ENCODE measurements at regions of chr1 and their contacts with region 1.

Region 1: GRCh38 chr1:26363549-26364448 is 8.8 kb downstream of the ZNF683 start:
- DNase-seq: peak; percentile 78 to 84 (median 79)
- H3K4me3 ChIP-seq: no peak overlapping the region
- H3K4me3 Mint-ChIP-seq: peak overlapping the region in 6 of 8 donors; percentile 54 to 82 (median 64)
- H3K27ac ChIP-seq: no peak overlapping the region
- H3K27ac Mint-ChIP-seq: peak overlapping the region in 6 of 7 donors; percentile 27 to 88 (median 70)
- H3K4me1 ChIP-seq: peaks cover 70% of the 10 kb centered on the region
- H3K4me1 Mint-ChIP-seq: peaks cover 31 to 81% (median 52%) of the 10 kb centered on the region in 4 donors
- H3K27me3 ChIP-seq: no peaks in the 10 kb centered on the region
- H3K27me3 Mint-ChIP-seq: no peaks in the 10 kb centered on the region

Region 2: GRCh38 chr1:24720152-24720551 is 1643.6 kb before region 1 on chr1:
- CTCF ChIA-PET with region 1: no interaction called
- POLR2A ChIA-PET with region 1: no interaction called
- intact Hi-C with region 1: no loop called
- DNase-seq: no peak
- H3K4me3 ChIP-seq: no peak overlapping the region
- H3K4me3 Mint-ChIP-seq: no peak overlapping the region
- H3K27ac ChIP-seq: no peak overlapping the region
- H3K27ac Mint-ChIP-seq: no peak overlapping the region
- H3K4me1 ChIP-seq: peaks cover 3% of the 10 kb centered on the region
- H3K4me1 Mint-ChIP-seq: peaks cover 5 to 10% (median 7%) of the 10 kb centered on the region in 4 donors
- H3K27me3 ChIP-seq: no peaks in the 10 kb centered on the region
- H3K27me3 Mint-ChIP-seq: peaks cover 0 to 3% of the 10 kb centered on the region in 2 donors

Region 3: DNA sequence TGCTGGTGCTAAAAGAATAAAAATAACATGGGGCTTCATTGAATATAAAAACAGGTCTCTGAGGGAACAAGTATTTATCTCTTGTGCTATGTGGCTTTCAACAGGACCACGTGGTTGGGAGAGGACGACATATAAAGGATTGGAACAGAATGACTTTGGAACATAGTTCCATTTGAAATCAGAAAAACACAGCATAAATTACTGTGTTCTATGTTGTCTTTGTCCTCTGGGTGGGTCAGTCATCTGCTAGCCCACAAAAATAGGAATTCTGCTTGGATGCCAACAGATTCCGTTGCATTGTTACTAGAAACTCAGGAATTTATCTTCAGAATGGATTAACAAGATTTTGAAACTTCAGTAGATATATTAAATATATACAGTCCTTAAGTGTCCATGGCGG is 123.9 kb before region 1 on chr1:
- CTCF ChIA-PET with region 1: interaction called, 13 read pairs
- POLR2A ChIA-PET with region 1: interaction called, 8 read pairs
- intact Hi-C with region 1: loop called (anchors 1 kb)
- DNase-seq: no peak
- H3K4me3 ChIP-seq: no peak overlapping the region
- H3K4me3 Mint-ChIP-seq: no peak overlapping the region
- H3K27ac ChIP-seq: no peak overlapping the region
- H3K27ac Mint-ChIP-seq: no peak overlapping the region
- H3K4me1 ChIP-seq: peaks cover 21% of the 10 kb centered on the region
- H3K4me1 Mint-ChIP-seq: peaks cover 19 to 29% (median 25%) of the 10 kb centered on the region in 4 donors
- H3K27me3 ChIP-seq: no peaks in the 10 kb centered on the region
- H3K27me3 Mint-ChIP-seq: no peaks in the 10 kb centered on the region

Region 4: GRCh38 chr1:26284597-26285360 is 79.0 kb before region 1 on chr1:
- CTCF ChIA-PET with region 1: interaction called, 307 read pairs
- POLR2A ChIA-PET with region 1: interaction called, 61 read pairs
- intact Hi-C with region 1: loop called (anchors 1 kb)
- DNase-seq: peak; percentile 91 to 99 (median 92)
- H3K4me3 ChIP-seq: peak overlapping the region; percentile 38 to 50
- H3K4me3 Mint-ChIP-seq: peak overlapping the region; percentile 82 to 94 (median 89)
- H3K27ac ChIP-seq: peak overlapping the region; percentile 91
- H3K27ac Mint-ChIP-seq: peak overlapping the region; percentile 94 to 100 (median 99)
- H3K4me1 ChIP-seq: peaks cover 95% of the 10 kb centered on the region
- H3K4me1 Mint-ChIP-seq: peaks cover 63 to 96% (median 81%) of the 10 kb centered on the region in 4 donors
- H3K27me3 ChIP-seq: no peaks in the 10 kb centered on the region
- H3K27me3 Mint-ChIP-seq: no peaks in the 10 kb centered on the region

Region 5: DNA sequence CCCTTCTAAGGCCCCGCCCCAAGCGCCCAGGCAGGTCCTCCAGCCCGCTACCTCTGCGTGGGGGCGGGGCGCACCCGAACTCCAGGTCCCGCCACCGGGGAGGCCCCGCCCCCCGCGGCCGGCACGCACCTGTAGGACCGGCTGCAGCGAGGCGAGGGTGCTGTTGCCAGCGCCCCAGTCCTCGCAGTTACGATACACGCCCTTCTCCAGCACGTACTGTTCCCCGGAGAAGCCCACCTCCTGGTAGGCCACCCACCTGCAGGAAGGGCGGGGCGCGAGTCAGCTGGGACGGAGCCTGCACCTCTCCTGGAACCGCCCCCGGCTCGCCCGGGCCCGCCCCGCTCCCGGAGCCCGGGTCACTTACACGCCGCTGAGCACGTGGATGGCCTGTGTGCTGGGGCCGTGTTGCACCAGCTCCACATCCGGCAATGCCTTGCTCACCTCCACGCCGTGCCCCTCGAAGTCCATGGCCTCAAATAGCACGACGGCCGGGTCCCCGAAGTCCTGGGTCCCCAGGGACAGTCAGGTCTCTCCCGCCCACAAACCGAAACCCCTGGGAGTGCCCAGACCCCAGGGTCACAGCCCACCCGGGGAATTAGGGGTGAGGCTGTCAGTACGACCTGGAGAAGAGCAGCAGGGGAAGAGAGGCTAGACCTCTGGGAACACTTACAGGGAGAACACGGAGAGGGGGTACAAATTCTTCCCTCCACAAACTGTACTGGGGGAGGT is 27.2 kb before region 1 on chr1:
- CTCF ChIA-PET with region 1: interaction called, 12 read pairs
- POLR2A ChIA-PET with region 1: interaction called, 5 read pairs
- intact Hi-C with region 1: loop called (anchors 1 kb)
- DNase-seq: peak; percentile 79 to 88 (median 82)
- H3K4me3 ChIP-seq: peak overlapping the region; percentile 61 to 73
- H3K4me3 Mint-ChIP-seq: peak overlapping the region; percentile 89 to 95 (median 92)
- H3K27ac ChIP-seq: peak overlapping the region; percentile 49
- H3K27ac Mint-ChIP-seq: peak overlapping the region in 6 of 7 donors; percentile 12 to 75 (median 62)
- H3K4me1 ChIP-seq: peaks cover 19% of the 10 kb centered on the region
- H3K4me1 Mint-ChIP-seq: peaks cover 0 to 33% (median 9%) of the 10 kb centered on the region in 4 donors
- H3K27me3 ChIP-seq: no peaks in the 10 kb centered on the region
- H3K27me3 Mint-ChIP-seq: no peaks in the 10 kb centered on the region

Region 6: GRCh38 chr1:26391450-26391849 is 27.7 kb after region 1 on chr1:
- CTCF ChIA-PET with region 1: interaction called, 121 read pairs
- POLR2A ChIA-PET with region 1: interaction called, 15 read pairs
- intact Hi-C with region 1: loop called (anchors 1 kb)
- DNase-seq: peak; percentile 52 to 63 (median 56)
- H3K4me3 ChIP-seq: no peak overlapping the region
- H3K4me3 Mint-ChIP-seq: peak overlapping the region in 2 of 8 donors; percentile 1 to 43
- H3K27ac ChIP-seq: no peak overlapping the region
- H3K27ac Mint-ChIP-seq: peak overlapping the region in 3 of 7 donors; percentile 51 to 75 (median 59)
- H3K4me1 ChIP-seq: peaks cover 42% of the 10 kb centered on the region
- H3K4me1 Mint-ChIP-seq: peaks cover 24 to 40% (median 28%) of the 10 kb centered on the region in 4 donors
- H3K27me3 ChIP-seq: no peaks in the 10 kb centered on the region
- H3K27me3 Mint-ChIP-seq: no peaks in the 10 kb centered on the region

Region 7: GRCh38 chr1:26408604-26409003 is 44.8 kb after region 1 on chr1:
- CTCF ChIA-PET with region 1: interaction called, 12 read pairs
- POLR2A ChIA-PET with region 1: no interaction called
- intact Hi-C with region 1: no loop called
- DNase-seq: peak; percentile 75 to 84 (median 78)
- H3K4me3 ChIP-seq: no peak overlapping the region
- H3K4me3 Mint-ChIP-seq: peak overlapping the region; percentile 23 to 79 (median 62)
- H3K27ac ChIP-seq: no peak overlapping the region
- H3K27ac Mint-ChIP-seq: peak overlapping the region in 2 of 7 donors; percentile 49 to 74
- H3K4me1 ChIP-seq: peaks cover 17% of the 10 kb centered on the region
- H3K4me1 Mint-ChIP-seq: peaks cover 9 to 24% (median 17%) of the 10 kb centered on the region in 4 donors
- H3K27me3 ChIP-seq: peaks cover 37% of the 10 kb centered on the region
- H3K27me3 Mint-ChIP-seq: peaks cover 32 to 42% of the 10 kb centered on the region in 2 donors

Region 8: GRCh38 chr1:26449868-26450267 is 86.1 kb after region 1 on chr1:
- CTCF ChIA-PET with region 1: no interaction called
- POLR2A ChIA-PET with region 1: no interaction called
- intact Hi-C with region 1: no loop called
- DNase-seq: no peak
- H3K4me3 ChIP-seq: no peak overlapping the region
- H3K4me3 Mint-ChIP-seq: no peak overlapping the region
- H3K27ac ChIP-seq: no peak overlapping the region
- H3K27ac Mint-ChIP-seq: no peak overlapping the region
- H3K4me1 ChIP-seq: no peaks in the 10 kb centered on the region
- H3K4me1 Mint-ChIP-seq: peaks cover 0 to 2% (median 0%) of the 10 kb centered on the region in 4 donors
- H3K27me3 ChIP-seq: no peaks in the 10 kb centered on the region
- H3K27me3 Mint-ChIP-seq: no peaks in the 10 kb centered on the region

Measured in CD4-positive, alpha-beta memory T cell (primary cell).